ENCODE measurements at regions of chr12 and their contacts with region 1.

Region 1: GRCh38 chr12:4276524-4277204 is 3.1 kb downstream of the CCND2 start:
- DNase-seq: peak; percentile 84 to 90
- H3K4me3 ChIP-seq: peak overlapping the region; percentile 90 to 97 (median 96); a peak in 4 of 8 replicates
- H3K27ac ChIP-seq: no peak overlapping the region
- H3K4me1 ChIP-seq: peaks cover 9 to 30% (median 13%) of the 10 kb centered on the region in 4 experiments
- H3K27me3 ChIP-seq: peaks cover 0 to 10% (median 7%) of the 10 kb centered on the region in 4 experiments; a peak in 5 of 7 replicates
- CTCF ChIP-seq: peak; percentile 74 to 92 (median 92)
- EP300 ChIP-seq: peak in 1 of 2 experiments; percentile 85; a peak in 2 of 3 replicates
- POLR2A ChIP-seq: peak in 1 of 2 experiments; percentile 58; a peak in 1 of 3 replicates
- RAD21 ChIP-seq: peak; percentile 97 to 99

Region 2: GRCh38 chr12:3964439-3964838 is 312.2 kb before region 1 on chr12:
- CTCF ChIA-PET with region 1: interaction called, 20 read pairs
- POLR2A ChIA-PET with region 1: interaction called, 5 read pairs
- DNase-seq: peak; percentile 17 to 70
- H3K4me3 ChIP-seq: no peak overlapping the region
- H3K27ac ChIP-seq: no peak overlapping the region
- H3K4me1 ChIP-seq: peaks cover 0 to 2% (median 0%) of the 10 kb centered on the region in 4 experiments; a peak in 2 of 7 replicates
- H3K27me3 ChIP-seq: no peaks in the 10 kb centered on the region
- CTCF ChIP-seq: peak; percentile 68 to 72 (median 69)
- EP300 ChIP-seq: no peak
- POLR2A ChIP-seq: no peak
- RAD21 ChIP-seq: peak; percentile 79 to 87

Region 3: DNA sequence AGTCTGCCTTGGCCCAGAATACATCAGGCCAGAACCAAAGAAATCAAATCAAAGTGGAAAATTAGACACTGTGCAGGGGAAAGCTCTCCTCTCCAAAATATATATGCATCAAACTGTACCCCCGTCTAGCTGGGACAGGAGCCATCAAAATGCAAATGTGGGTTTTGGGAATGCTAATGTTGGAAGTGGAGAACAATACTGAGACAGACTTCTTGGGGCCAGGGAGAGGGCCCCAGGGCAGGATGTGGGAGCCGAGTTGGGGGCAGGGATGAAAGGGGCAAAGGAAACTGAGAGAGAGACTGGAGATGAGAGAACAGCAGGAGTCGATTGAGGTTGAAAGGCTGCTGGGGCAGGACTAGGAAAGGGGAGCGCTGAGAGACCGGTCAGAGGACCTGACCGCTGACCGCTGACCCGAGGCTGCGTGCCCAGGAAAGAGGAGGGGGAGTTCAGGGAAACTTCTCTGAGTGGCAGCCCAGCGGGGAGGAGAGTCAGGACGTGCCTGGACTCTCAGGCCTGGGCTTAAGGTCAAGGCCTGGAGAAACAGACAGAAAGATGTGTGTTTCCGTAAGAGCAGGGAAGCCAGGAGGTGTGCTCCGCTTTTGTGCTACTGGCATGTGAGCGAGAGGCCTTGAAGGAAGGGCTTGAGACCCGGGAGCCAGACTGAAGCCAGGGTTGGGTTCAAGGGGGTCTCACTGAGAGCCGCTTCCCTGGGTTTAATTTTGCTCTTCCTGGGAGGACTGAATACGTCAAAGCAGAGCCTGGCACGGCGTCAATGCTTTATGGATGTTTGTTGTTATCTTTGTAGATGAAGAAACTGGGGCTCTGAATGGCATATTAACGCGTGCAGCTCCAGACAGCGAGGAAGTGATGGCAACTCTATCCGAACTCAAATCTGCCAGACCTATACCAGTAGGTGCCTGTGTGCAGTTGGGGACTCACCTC is 251.0 kb before region 1 on chr12:
- CTCF ChIA-PET with region 1: interaction called, 16 read pairs
- POLR2A ChIA-PET with region 1: interaction called, 10 read pairs
- DNase-seq: peak; percentile 78 to 89
- H3K4me3 ChIP-seq: peak overlapping the region; percentile 11 to 41 (median 29); a peak in 7 of 8 replicates
- H3K27ac ChIP-seq: peak overlapping the region; percentile 80
- H3K4me1 ChIP-seq: peaks cover 20 to 37% (median 34%) of the 10 kb centered on the region in 4 experiments
- H3K27me3 ChIP-seq: peaks cover 2 to 10% (median 2%) of the 10 kb centered on the region in 4 experiments; a peak in 5 of 7 replicates
- CTCF ChIP-seq: no peak
- EP300 ChIP-seq: peak in 1 of 2 experiments; percentile 55; a peak in 1 of 3 replicates
- POLR2A ChIP-seq: no peak
- RAD21 ChIP-seq: no peak

Region 4: DNA sequence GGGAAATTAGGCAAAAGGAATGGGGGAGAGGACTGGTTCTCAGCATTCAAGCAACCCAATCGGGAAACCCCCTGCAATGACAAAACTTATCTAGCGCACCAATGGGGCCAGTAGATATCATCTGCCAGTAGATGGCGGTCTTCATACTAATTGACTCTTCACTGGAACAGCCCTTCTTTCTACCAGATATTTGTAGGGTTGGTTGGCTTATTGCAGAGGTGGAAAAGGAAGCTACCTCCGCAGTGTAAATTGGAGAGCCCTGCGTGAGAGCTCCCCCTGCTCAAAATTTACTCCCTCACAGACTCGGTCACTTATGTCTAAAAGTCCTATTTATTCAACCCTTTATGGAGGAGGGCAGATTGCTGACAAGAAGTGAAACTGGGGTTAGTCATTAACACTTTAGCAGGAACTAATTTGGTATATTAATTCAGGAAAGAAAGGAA is 169.2 kb before region 1 on chr12:
- CTCF ChIA-PET with region 1: interaction called, 28 read pairs
- POLR2A ChIA-PET with region 1: interaction called, 58 read pairs
- DNase-seq: peak; percentile 15 to 53
- H3K4me3 ChIP-seq: no peak overlapping the region
- H3K27ac ChIP-seq: no peak overlapping the region
- H3K4me1 ChIP-seq: peaks cover 0 to 6% (median 0%) of the 10 kb centered on the region in 4 experiments; a peak in 2 of 7 replicates
- H3K27me3 ChIP-seq: no peaks in the 10 kb centered on the region
- CTCF ChIP-seq: peak in 2 of 3 experiments; percentile 68 to 79; a peak in 3 of 4 replicates
- EP300 ChIP-seq: no peak
- POLR2A ChIP-seq: no peak
- RAD21 ChIP-seq: peak; percentile 79 to 90

Region 5: DNA sequence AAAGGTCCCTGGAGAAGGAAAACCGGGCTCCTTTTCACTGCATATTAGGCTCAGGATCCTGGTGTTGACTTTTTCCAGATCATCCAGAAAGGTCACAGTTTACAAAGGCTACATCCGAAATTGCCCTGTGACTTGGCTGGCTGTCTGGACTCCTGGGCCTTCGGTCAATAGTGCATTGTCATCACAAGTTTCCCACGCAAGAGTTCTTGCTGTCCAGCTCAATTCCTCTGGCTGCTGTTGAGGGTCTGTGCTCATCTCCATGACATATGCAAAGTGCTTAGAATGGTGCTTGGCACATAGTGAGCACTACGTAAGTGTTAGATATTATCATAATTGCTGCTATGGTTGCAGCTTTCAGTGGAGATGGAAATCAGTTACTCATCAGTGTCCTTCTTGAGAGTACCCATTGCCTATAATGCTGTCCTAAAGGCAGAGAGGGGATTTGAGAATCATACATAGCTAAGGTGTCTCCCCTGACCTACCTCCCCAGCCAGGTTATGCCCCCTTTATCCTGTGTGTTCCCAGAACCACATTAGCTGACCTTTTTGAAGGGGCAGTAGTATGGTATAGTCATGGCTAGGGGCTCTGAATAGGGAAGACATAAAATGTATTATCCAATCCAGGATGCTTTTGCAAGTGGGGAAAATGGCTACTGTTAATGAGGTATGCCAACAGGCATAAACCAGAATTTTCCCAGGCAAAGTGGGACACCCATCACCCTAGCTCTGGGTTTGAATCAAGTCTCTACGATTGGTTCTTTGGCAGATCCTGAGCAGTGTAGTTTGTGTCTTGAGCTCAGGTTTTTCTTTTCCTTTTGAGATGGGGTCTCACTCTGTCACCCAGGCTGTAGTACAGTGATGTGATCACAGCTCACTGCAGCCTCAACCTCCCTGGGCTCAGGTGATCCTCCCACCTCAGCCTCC is 135.1 kb before region 1 on chr12:
- CTCF ChIA-PET with region 1: interaction called, 34 read pairs
- POLR2A ChIA-PET with region 1: interaction called, 41 read pairs
- DNase-seq: no peak
- H3K4me3 ChIP-seq: no peak overlapping the region
- H3K27ac ChIP-seq: no peak overlapping the region
- H3K4me1 ChIP-seq: peaks cover 3 to 12% (median 4%) of the 10 kb centered on the region in 4 experiments; a peak in 5 of 7 replicates
- H3K27me3 ChIP-seq: no peaks in the 10 kb centered on the region; a peak in 1 of 7 replicates
- CTCF ChIP-seq: no peak
- EP300 ChIP-seq: no peak
- POLR2A ChIP-seq: no peak
- RAD21 ChIP-seq: no peak

Region 6: DNA sequence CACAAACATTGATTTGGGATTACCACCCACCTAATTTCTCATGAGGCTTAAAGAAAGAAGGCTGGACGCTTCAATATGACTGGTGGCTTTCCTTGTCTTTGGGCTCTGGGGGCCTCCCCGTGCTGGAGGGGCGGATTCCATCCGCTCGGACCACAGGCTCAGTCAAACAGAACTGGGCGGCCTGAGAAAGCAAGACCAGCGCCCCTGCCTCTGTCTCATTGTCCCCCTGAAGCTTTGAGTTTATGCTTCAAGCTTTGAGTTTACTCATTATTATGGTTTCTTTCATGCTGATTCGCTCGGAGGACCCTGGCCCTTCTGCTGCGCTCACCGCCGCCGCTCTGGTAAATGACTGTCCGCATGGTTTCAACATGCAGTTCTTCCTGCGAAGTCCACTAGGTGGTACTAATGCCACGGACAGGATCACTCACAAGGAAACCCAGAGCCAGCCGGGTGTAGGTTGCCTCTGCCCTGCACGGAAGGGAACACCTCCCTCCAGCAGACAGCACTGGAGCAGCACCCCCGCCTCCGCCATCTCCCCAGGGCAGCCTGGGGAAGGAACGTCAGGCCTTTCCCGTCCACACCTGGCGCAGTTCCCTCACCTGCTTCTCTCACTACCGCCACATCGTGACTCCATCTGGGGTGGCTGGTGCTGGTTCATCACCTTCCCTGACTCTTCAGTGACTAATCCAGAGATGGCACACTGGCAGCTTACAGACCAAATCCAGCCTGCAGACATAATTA is 31.1 kb after region 1 on chr12:
- CTCF ChIA-PET with region 1: interaction called, 7 read pairs
- POLR2A ChIA-PET with region 1: interaction called, 531 read pairs
- DNase-seq: peak; percentile 80 to 87
- H3K4me3 ChIP-seq: peak overlapping the region in 3 of 4 experiments; percentile 24 to 49 (median 32); a peak in 5 of 8 replicates
- H3K27ac ChIP-seq: 0 out of 2 replicates have a peak overlapping the region, but pooled peaks have one; percentile 26
- H3K4me1 ChIP-seq: peaks cover 3 to 10% (median 6%) of the 10 kb centered on the region in 4 experiments; a peak in 6 of 7 replicates
- H3K27me3 ChIP-seq: no peaks in the 10 kb centered on the region
- CTCF ChIP-seq: peak; percentile 60 to 81 (median 67)
- EP300 ChIP-seq: no peak
- POLR2A ChIP-seq: peak in 1 of 2 experiments; percentile 82; a peak in 2 of 3 replicates
- RAD21 ChIP-seq: peak; percentile 74 to 81